Dendritic cell treated with granulocyte-macrophage colony-stimulating factor and Interleukin-4, amounts not matched to agents 40 ng/mL and 50 ng/mL, for 4 days (primary cell): ENCODE measurements at regions of chr1 and their contacts with region 1.

Region 1: DNA sequence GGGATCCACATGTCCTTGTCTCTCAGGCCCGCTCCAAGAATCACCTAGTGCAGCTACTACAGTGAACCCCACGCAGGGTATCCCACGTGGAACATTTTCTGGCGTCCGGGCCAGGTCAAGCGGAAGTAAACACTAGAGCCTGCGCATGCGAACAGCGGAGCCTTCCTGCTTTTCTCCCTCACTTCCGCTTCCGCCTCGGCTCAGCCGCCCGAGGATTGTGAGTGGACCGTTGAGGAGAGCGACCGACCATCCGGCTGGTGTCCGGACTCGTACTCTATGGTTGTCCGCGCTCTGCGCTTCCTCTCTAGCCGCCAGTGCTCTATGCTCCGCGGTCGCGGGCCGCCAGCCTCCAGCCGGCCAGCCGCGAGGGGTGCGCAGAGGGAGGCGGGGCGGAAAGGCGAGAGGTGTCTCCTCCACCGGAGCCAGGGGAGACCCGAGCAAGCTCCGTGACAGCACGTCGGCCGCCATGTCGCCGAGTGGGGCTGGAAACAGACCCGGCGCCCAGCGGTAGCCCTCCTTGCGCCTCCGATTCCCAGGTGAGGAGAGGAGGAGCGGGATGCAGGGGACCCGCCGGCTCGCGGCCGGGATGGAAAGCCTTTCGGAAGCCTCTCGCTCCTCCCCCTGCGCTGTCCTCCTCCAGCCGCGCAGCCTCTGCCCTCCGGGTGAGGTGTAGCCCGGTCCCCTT is at the starts of genes CNST and TFB2M:
- H3K4me3 Mint-ChIP-seq: peak within 1 kb of the TSS; percentile 99
- H3K27ac Mint-ChIP-seq: peak within 1 kb of the TSS; percentile 99
- H3K4me1 Mint-ChIP-seq: peaks cover 40% of the 10 kb centered on the region
- H3K27me3 Mint-ChIP-seq: no peaks in the 10 kb centered on the region

Region 2: GRCh38 chr1:246608616-246609376 is 42.5 kb after region 1 on chr1:
- intact Hi-C with region 1: loop called (anchors 5 kb)
- H3K4me3 Mint-ChIP-seq: no peak overlapping the region
- H3K27ac Mint-ChIP-seq: peak overlapping the region; percentile 52
- H3K4me1 Mint-ChIP-seq: peaks cover 31% of the 10 kb centered on the region
- H3K27me3 Mint-ChIP-seq: no peaks in the 10 kb centered on the region

Region 3: DNA sequence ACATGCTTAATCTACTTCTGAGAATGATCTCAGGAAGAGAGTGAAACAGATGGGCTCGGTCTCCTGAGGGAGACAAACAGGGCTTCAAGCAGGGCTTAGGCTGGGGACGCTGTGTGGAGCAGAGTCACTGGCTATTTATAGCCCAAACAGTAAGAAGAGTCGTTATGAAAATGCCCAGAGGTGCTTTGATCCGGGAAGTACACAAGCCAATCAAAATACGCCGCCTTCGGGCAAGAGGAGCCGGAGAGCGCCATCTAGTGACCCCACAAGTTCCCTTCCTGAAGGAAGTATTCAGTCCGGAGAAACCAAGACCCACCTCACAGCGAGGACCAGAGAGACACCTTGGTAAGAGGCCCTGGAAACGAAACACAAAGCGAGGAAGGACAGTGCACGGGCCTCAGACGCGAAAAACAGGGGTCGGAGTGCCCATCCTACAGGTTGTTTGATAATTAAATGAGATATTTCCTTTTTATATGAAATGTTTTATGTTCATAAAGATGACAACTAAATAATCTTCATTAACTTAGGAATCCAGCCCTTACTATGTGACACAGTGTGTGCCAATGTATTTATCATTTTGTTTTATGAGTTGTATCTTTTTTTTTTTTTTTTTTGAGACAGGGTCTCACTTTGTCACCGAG is 132.9 kb after region 1 on chr1:
- intact Hi-C with region 1: loop called (anchors 5 kb)
- H3K4me3 Mint-ChIP-seq: peak overlapping the region; percentile 78
- H3K27ac Mint-ChIP-seq: peak overlapping the region; percentile 83
- H3K4me1 Mint-ChIP-seq: peaks cover 38% of the 10 kb centered on the region
- H3K27me3 Mint-ChIP-seq: no peaks in the 10 kb centered on the region

Region 4: DNA sequence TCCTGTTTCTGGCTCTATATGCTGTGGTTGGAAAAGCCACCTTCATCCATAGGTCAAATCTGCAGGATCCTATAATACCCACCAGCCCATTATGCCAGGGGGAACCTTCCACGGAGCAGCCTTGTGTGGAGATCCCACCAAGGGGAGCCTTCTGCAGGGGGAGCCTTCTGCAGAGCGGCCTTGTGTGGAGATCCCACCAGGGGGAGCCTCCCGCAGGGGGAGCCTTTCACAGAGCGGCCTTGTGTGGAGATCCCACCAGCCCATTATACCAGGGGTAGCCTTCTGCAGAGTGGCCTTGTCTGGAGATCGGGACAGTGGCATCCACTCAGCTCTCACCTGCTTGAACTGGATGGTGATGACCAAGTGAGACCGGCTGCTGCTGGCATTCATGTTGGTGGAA is 243.2 kb after region 1 on chr1:
- intact Hi-C with region 1: no loop called
- H3K4me3 Mint-ChIP-seq: no peak overlapping the region
- H3K27ac Mint-ChIP-seq: no peak overlapping the region
- H3K4me1 Mint-ChIP-seq: no peaks in the 10 kb centered on the region
- H3K27me3 Mint-ChIP-seq: no peaks in the 10 kb centered on the region